Sigmoid colon (tissue), 7 donors: ENCODE measurements at regions of chr22 and their contacts with region 1.

Region 1: DNA sequence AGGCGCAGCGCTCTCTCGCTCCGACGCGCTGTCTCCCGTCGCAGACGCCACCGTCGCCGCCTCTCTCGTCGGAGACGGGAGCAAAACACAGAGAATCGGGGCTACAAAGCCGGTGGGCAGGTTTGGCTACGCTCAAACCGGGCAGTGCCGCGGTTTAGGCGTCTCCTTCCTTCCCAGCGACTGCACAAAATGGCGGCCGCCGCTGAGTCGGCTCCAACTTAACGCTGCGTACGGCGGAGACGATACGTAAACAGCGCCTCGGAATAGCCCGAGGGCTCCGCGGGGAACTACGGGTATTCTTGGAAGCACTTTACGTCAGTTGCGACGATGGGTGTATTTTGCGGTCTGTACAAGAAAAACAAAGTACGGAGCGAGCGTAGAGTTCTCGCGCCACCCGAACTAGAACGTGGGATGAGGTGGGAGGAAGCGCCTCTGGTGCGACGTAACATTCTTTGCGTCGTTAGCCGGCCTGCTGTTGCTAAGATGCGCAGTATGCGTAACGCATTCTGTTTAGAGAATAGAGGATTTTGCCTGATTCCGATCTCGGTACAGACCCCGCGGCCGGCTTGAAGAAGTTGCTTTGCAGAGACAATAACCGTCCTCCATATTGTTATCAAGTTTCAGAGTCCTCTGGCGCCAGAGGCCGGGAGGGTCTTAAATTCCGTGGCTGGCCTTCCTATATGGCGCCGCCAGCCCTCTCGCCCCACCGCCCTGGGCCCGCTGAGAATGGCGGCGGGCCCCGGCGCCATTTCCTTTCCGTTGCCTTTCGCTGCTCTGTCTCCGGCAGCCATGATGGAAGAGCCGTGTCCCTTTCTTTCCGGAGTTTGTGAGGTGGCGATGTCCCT is at the start of gene DDX17:
- DNase-seq: peak; percentile 98
- H3K4me3 ChIP-seq: peak within 1 kb of the TSS; percentile 73 to 94 (median 90)
- H3K27ac ChIP-seq: peak within 1 kb of the TSS; percentile 98 to 100 (median 99)
- H3K4me1 ChIP-seq: peaks cover 0 to 46% (median 45%) of the 10 kb centered on the region in 4 donors
- H3K27me3 ChIP-seq: no peaks in the 10 kb centered on the region
- CTCF ChIP-seq: peak in 1 of 4 experiments; percentile 10
- EP300 ChIP-seq: no peak
- POLR2A ChIP-seq: peak; percentile 41 to 64
- total RNA-seq, gene DDX17: 504 to 630 (median 591) TPM

Region 2: GRCh38 chr22:38383417-38383816 is 122.9 kb before region 1 on chr22:
- intact Hi-C with region 1: no loop called
- DNase-seq: no peak
- H3K4me3 ChIP-seq: no peak overlapping the region
- H3K27ac ChIP-seq: no peak overlapping the region
- H3K4me1 ChIP-seq: peaks cover 0 to 5% (median 0%) of the 10 kb centered on the region in 4 donors
- H3K27me3 ChIP-seq: no peaks in the 10 kb centered on the region
- CTCF ChIP-seq: no peak
- EP300 ChIP-seq: no peak
- POLR2A ChIP-seq: no peak

Region 3: DNA sequence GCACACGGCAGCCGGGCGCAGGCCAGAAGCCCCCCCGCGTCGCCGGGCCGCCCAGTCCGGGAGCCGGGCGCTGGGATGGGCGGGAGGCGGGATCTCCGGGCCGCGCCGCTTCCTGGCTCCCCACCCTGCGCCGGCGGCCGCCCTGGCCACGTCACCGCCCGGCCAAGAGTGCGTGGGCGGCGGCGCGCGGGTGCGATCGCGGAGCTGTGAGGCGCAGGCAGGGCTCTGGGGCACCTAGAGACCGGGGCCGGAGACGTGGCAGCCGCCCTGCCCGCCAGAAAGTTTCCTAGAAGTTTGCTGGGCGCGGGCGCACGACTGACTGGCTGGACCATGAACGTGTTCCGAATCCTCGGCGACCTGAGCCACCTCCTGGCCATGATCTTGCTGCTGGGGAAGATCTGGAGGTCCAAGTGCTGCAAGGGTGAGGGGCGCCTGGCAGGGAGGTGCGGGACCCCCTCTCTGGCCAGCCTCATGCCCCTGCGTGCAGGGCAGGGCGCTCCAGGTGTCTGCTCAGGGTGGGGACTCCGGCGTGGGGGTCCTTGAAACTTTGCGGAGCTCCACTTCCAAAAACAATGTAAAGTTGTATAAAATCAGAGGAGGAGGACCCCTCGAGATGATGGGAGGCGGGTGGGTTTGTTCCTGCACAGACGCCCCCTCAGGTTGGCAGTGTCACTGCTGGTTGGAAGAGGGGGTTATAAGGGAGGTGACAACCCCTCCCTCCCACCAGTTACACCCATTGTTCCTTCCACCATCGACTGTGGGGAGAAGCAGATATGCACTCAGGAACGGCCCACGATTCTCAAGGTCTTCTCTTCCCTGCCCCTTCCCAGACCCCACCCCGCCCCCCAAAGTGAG is 38.2 kb before region 1 on chr22 and contains the start of gene KDELR3:
- intact Hi-C with region 1: loop called (anchors 5 kb)
- DNase-seq: peak; percentile 80
- H3K4me3 ChIP-seq: peak within 1 kb of the TSS; percentile 28 to 59 (median 56)
- H3K27ac ChIP-seq: peak within 1 kb of the TSS in 3 of 4 donors; percentile 8 to 58 (median 50)
- H3K4me1 ChIP-seq: peaks cover 0 to 19% (median 16%) of the 10 kb centered on the region in 4 donors
- H3K27me3 ChIP-seq: peaks cover 0 to 9% (median 3%) of the 10 kb centered on the region in 3 donors
- CTCF ChIP-seq: no peak
- EP300 ChIP-seq: no peak
- POLR2A ChIP-seq: no peak
- total RNA-seq, gene KDELR3: 2.5 to 5.5 (median 2.9) TPM